Sigmoid colon (tissue), 7 donors: ENCODE measurements at regions of chr3 and their contacts with region 1.

Region 1: DNA sequence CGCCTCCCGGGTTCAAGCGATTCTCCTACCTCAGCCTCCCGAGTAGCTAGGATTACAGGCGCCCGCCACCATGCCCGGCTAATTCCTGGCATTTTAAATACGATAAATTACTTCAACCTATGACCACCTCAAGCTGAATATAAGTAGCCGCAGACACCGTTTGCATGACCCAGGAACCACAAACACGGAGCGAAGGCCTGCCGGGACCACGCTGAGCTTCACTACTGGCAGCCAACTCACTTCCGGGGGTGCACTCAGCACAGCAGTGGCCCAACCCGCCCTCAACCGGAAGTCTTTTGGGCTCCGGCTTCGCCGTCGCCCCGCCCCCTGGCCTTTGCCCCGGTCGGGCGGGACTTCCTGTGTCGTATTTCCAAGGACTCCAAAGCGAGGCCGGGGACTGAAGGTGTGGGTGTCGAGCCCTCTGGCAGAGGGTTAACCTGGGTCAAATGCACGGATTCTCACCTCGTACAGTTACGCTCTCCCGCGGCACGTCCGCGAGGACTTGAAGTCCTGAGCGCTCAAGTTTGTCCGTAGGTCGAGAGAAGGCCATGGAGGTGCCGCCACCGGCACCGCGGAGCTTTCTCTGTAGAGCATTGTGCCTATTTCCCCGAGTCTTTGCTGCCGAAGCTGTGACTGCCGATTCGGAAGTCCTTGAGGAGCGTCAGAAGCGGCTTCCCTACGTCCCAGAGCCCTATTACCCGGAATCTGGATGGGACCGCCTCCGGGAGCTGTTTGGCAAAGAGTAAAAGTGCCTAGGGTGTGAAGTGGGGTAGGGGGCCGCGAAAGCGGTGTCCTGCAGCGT is at the start of gene TIMMDC1:
- DNase-seq: peak; percentile 98
- H3K4me3 ChIP-seq: peak within 1 kb of the TSS; percentile 70 to 79 (median 72)
- H3K27ac ChIP-seq: peak within 1 kb of the TSS; percentile 90 to 94 (median 92)
- H3K4me1 ChIP-seq: peaks cover 0 to 43% (median 30%) of the 10 kb centered on the region in 4 donors
- H3K27me3 ChIP-seq: no peaks in the 10 kb centered on the region
- CTCF ChIP-seq: no peak
- EP300 ChIP-seq: peak in 1 of 4 donors; percentile 42
- POLR2A ChIP-seq: peak; percentile 81 to 89
- total RNA-seq, gene TIMMDC1: 37.6 to 59.6 (median 53.1) TPM

Region 2: DNA sequence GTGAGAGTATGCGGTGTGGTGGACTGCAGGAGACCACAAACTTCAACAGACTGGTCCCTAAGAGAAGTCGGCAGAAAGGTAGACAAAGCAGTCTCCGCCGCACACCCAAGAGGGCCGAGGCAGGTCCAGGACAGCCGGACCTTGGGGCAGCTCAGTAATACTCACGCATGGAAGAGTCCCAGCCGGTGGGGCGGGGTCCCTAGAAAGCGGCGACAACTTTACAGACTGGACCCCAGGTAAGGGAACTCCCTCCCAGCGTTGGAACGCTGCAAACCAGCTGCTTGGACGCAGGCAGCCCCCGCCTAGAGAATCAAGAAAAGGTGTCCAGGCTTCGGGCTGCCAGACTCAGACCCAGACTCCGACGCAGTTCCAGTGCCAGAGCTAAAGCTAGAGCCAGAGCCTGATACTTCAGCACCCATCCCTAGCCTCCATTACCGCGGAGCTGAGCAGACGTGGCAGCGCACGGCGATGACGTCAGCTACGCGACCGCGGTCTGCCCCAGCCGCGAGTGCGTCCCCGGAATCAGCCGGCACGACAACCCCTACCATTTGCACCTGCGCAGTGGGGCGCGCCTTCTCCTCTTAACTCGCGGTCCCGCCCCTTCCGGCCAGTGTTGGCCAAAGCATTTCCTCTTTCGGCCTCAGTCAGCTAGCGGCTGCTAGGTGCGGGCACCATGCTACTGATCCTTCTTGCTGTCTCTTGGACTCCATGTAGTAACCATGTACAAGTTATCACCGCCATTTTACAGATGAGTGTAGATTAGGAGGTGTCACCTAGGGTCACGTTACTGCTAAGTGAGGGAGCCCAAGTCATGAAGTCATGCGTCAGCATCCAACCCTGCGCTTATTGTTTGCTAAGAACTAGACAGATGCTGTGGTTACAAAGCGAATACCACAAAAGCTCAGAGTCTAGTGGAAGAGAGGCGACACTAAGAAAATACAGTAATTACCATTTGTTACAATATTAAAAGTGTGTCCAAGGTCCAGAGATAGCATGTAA is 34.9 kb before region 1 on chr3 and contains the start of gene TMEM39A:
- intact Hi-C with region 1: loop called (anchors 1 kb)
- DNase-seq: peak; percentile 100
- H3K4me3 ChIP-seq: peak within 1 kb of the TSS; percentile 63 to 93 (median 74)
- H3K27ac ChIP-seq: peak within 1 kb of the TSS; percentile 83 to 88 (median 86)
- H3K4me1 ChIP-seq: peaks cover 0 to 37% (median 22%) of the 10 kb centered on the region in 4 donors
- H3K27me3 ChIP-seq: no peaks in the 10 kb centered on the region
- CTCF ChIP-seq: peak in 1 of 4 experiments; percentile 20
- EP300 ChIP-seq: peak in 1 of 4 donors; percentile 61
- POLR2A ChIP-seq: peak; percentile 83 to 93
- total RNA-seq, gene TMEM39A: 14.8 to 48.5 (median 20.1) TPM

Region 3: GRCh38 chr3:119469381-119470189 is 28.8 kb before region 1 on chr3:
- intact Hi-C with region 1: loop called (anchors 2 kb)
- DNase-seq: no peak
- H3K4me3 ChIP-seq: peak overlapping the region; percentile 62 to 78 (median 75)
- H3K27ac ChIP-seq: peak overlapping the region; percentile 73 to 79 (median 77)
- H3K4me1 ChIP-seq: peaks cover 0 to 20% (median 14%) of the 10 kb centered on the region in 4 donors
- H3K27me3 ChIP-seq: no peaks in the 10 kb centered on the region
- CTCF ChIP-seq: no peak
- EP300 ChIP-seq: no peak
- POLR2A ChIP-seq: no peak